ENCODE measurements at regions of chr6 and their contacts with region 1.

Region 1: GRCh38 chr6:146985111-146985510 is 219.1 kb upstream of the STXBP5 start:
- DNase-seq: peak; percentile 66 to 74
- H3K4me3 ChIP-seq: no peak overlapping the region
- H3K4me3 Mint-ChIP-seq: peak overlapping the region; percentile 58
- H3K27ac Mint-ChIP-seq: peak overlapping the region; percentile 83
- H3K4me1 ChIP-seq: peaks cover 59% of the 10 kb centered on the region
- H3K4me1 Mint-ChIP-seq: peaks cover 40% of the 10 kb centered on the region
- H3K27me3 ChIP-seq: no peaks in the 10 kb centered on the region
- H3K27me3 Mint-ChIP-seq: no peaks in the 10 kb centered on the region
- CTCF ChIP-seq: no peak

Region 2: GRCh38 chr6:146905181-146905704 is 79.9 kb before region 1 on chr6:
- CTCF ChIA-PET with region 1: no interaction called
- POLR2A ChIA-PET with region 1: no interaction called
- intact Hi-C with region 1: loop called (anchors 2 kb)
- DNase-seq: no peak
- H3K4me3 ChIP-seq: no peak overlapping the region
- H3K4me3 Mint-ChIP-seq: no peak overlapping the region
- H3K27ac Mint-ChIP-seq: no peak overlapping the region
- H3K4me1 ChIP-seq: no peaks in the 10 kb centered on the region
- H3K4me1 Mint-ChIP-seq: no peaks in the 10 kb centered on the region
- H3K27me3 ChIP-seq: no peaks in the 10 kb centered on the region
- H3K27me3 Mint-ChIP-seq: no peaks in the 10 kb centered on the region
- CTCF ChIP-seq: no peak

Region 3: GRCh38 chr6:146950351-146950835 is 34.7 kb before region 1 on chr6:
- CTCF ChIA-PET with region 1: no interaction called
- POLR2A ChIA-PET with region 1: no interaction called
- intact Hi-C with region 1: loop called (anchors 2 kb)
- DNase-seq: peak in 1 of 2 experiments; percentile 2
- H3K4me3 ChIP-seq: no peak overlapping the region
- H3K4me3 Mint-ChIP-seq: no peak overlapping the region
- H3K27ac Mint-ChIP-seq: peak overlapping the region; percentile 40
- H3K4me1 ChIP-seq: peaks cover 7% of the 10 kb centered on the region
- H3K4me1 Mint-ChIP-seq: peaks cover 9% of the 10 kb centered on the region
- H3K27me3 ChIP-seq: no peaks in the 10 kb centered on the region
- H3K27me3 Mint-ChIP-seq: no peaks in the 10 kb centered on the region
- CTCF ChIP-seq: no peak

Region 4: GRCh38 chr6:147081140-147081539 is 96.0 kb after region 1 on chr6:
- CTCF ChIA-PET with region 1: no interaction called
- POLR2A ChIA-PET with region 1: no interaction called
- intact Hi-C with region 1: loop called (anchors 1 kb)
- DNase-seq: peak; percentile 46 to 71
- H3K4me3 ChIP-seq: no peak overlapping the region
- H3K4me3 Mint-ChIP-seq: peak overlapping the region; percentile 66
- H3K27ac Mint-ChIP-seq: peak overlapping the region; percentile 61
- H3K4me1 ChIP-seq: peaks cover 32% of the 10 kb centered on the region
- H3K4me1 Mint-ChIP-seq: peaks cover 6% of the 10 kb centered on the region
- H3K27me3 ChIP-seq: no peaks in the 10 kb centered on the region
- H3K27me3 Mint-ChIP-seq: no peaks in the 10 kb centered on the region
- CTCF ChIP-seq: no peak

Region 5: GRCh38 chr6:147202516-147203312 is 217.6 kb after region 1 on chr6:
- CTCF ChIA-PET with region 1: no interaction called
- POLR2A ChIA-PET with region 1: no interaction called
- intact Hi-C with region 1: loop called (anchors 2 kb)
- DNase-seq: peak; percentile 87 to 88
- H3K4me3 ChIP-seq: peak overlapping the region; percentile 69
- H3K4me3 Mint-ChIP-seq: peak overlapping the region; percentile 98
- H3K27ac Mint-ChIP-seq: peak overlapping the region; percentile 92
- H3K4me1 ChIP-seq: peaks cover 11% of the 10 kb centered on the region; the same call in 1 of the 2 replicates
- H3K4me1 Mint-ChIP-seq: peaks cover 14% of the 10 kb centered on the region
- H3K27me3 ChIP-seq: no peaks in the 10 kb centered on the region
- H3K27me3 Mint-ChIP-seq: no peaks in the 10 kb centered on the region
- CTCF ChIP-seq: no peak